Esophagus muscularis mucosa (tissue), 4 donors: ENCODE measurements at regions of chr6 and their contacts with region 1.

Region 1: DNA sequence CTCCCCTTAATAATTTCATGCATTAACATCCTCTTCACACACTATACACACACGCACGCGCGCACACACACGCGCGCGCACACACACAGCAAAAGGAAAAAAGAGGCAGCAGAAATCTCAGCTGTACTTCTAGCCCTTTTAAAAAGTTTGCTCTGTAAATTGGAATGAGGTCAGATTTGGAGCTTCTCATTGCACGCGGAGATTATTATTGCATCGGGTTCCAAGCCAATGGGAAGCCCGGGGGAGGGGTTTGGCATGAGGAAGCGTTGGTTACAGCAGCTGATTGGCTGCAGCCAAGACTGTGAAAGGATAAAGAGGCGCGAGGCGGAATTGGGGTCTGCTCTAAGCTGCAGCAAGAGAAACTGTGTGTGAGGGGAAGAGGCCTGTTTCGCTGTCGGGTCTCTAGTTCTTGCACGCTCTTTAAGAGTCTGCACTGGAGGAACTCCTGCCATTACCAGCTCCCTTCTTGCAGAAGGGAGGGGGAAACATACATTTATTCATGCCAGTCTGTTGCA is at the start of gene SOX4:
- DNase-seq: peak; percentile 97
- H3K4me3 ChIP-seq: peak within 1 kb of the TSS; percentile 79 to 85 (median 79)
- H3K27ac ChIP-seq: peak within 1 kb of the TSS; percentile 91 to 95 (median 94)
- H3K4me1 ChIP-seq: peaks cover 12 to 22% (median 21%) of the 10 kb centered on the region in 4 donors
- H3K27me3 ChIP-seq: no peaks in the 10 kb centered on the region
- CTCF ChIP-seq: no peak
- EP300 ChIP-seq: no peak
- POLR2A ChIP-seq: no peak
- total RNA-seq, gene SOX4: 4.1 to 6.5 (median 4.8) TPM

Region 2: GRCh38 chr6:20564269-20564668 is 1029.2 kb before region 1 on chr6:
- intact Hi-C with region 1: loop called (anchors 2 kb)
- DNase-seq: no peak
- H3K4me3 ChIP-seq: no peak overlapping the region
- H3K27ac ChIP-seq: no peak overlapping the region
- H3K4me1 ChIP-seq: peaks cover 0 to 14% (median 8%) of the 10 kb centered on the region in 4 donors
- H3K27me3 ChIP-seq: no peaks in the 10 kb centered on the region
- CTCF ChIP-seq: peak; percentile 48 to 67 (median 56)
- EP300 ChIP-seq: no peak
- POLR2A ChIP-seq: no peak

Region 3: GRCh38 chr6:21664314-21665109 is 71.0 kb after region 1 on chr6:
- intact Hi-C with region 1: loop called (anchors 5 kb)
- DNase-seq: no peak
- H3K4me3 ChIP-seq: peak overlapping the region; percentile 62 to 78 (median 70)
- H3K27ac ChIP-seq: peak overlapping the region; percentile 57 to 83 (median 80)
- H3K4me1 ChIP-seq: peaks cover 27 to 53% (median 40%) of the 10 kb centered on the region in 4 donors
- H3K27me3 ChIP-seq: no peaks in the 10 kb centered on the region
- CTCF ChIP-seq: no peak
- EP300 ChIP-seq: no peak
- POLR2A ChIP-seq: no peak

Region 4: GRCh38 chr6:21707524-21708319 is 114.3 kb after region 1 on chr6:
- intact Hi-C with region 1: no loop called
- DNase-seq: no peak
- H3K4me3 ChIP-seq: no peak overlapping the region
- H3K27ac ChIP-seq: no peak overlapping the region
- H3K4me1 ChIP-seq: peaks cover 0 to 37% (median 28%) of the 10 kb centered on the region in 4 donors
- H3K27me3 ChIP-seq: no peaks in the 10 kb centered on the region
- CTCF ChIP-seq: no peak
- EP300 ChIP-seq: no peak
- POLR2A ChIP-seq: no peak

Region 5: GRCh38 chr6:21731411-21732031 is 138.1 kb after region 1 on chr6:
- intact Hi-C with region 1: loop called (anchors 10 kb)
- DNase-seq: peak; percentile 90
- H3K4me3 ChIP-seq: no peak overlapping the region
- H3K27ac ChIP-seq: peak overlapping the region; percentile 45 to 75 (median 74)
- H3K4me1 ChIP-seq: peaks cover 9 to 60% (median 56%) of the 10 kb centered on the region in 4 donors
- H3K27me3 ChIP-seq: no peaks in the 10 kb centered on the region
- CTCF ChIP-seq: no peak
- EP300 ChIP-seq: no peak
- POLR2A ChIP-seq: no peak

Region 6: DNA sequence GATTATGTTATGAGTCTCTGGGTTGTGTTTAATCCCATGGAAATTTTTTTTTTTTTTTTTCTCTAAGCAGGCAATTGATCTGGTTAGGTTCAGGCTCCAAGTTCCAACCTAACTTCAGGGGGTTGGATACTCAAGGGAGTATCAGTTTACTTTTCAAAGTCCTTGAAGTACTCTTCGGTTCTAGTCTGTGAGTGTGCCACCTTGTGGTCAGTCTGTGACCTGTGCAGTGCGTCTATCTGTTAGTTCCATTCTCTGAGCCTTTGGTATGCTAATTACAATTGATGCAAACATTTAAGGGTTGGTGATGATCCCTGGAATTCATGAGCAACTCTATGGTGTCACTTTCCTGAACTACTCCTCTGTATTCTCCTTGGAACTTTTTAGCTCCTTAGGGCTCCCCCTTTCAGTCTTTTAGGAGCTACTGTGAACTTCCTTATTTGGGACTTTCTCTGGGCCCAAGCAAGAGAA is 342.1 kb after region 1 on chr6:
- intact Hi-C with region 1: loop called (anchors 5 kb)
- DNase-seq: no peak
- H3K4me3 ChIP-seq: no peak overlapping the region
- H3K27ac ChIP-seq: no peak overlapping the region
- H3K4me1 ChIP-seq: peaks cover 0 to 9% (median 0%) of the 10 kb centered on the region in 4 donors
- H3K27me3 ChIP-seq: no peaks in the 10 kb centered on the region
- CTCF ChIP-seq: peak; percentile 28 to 62 (median 43)
- EP300 ChIP-seq: no peak
- POLR2A ChIP-seq: no peak

Region 7: DNA sequence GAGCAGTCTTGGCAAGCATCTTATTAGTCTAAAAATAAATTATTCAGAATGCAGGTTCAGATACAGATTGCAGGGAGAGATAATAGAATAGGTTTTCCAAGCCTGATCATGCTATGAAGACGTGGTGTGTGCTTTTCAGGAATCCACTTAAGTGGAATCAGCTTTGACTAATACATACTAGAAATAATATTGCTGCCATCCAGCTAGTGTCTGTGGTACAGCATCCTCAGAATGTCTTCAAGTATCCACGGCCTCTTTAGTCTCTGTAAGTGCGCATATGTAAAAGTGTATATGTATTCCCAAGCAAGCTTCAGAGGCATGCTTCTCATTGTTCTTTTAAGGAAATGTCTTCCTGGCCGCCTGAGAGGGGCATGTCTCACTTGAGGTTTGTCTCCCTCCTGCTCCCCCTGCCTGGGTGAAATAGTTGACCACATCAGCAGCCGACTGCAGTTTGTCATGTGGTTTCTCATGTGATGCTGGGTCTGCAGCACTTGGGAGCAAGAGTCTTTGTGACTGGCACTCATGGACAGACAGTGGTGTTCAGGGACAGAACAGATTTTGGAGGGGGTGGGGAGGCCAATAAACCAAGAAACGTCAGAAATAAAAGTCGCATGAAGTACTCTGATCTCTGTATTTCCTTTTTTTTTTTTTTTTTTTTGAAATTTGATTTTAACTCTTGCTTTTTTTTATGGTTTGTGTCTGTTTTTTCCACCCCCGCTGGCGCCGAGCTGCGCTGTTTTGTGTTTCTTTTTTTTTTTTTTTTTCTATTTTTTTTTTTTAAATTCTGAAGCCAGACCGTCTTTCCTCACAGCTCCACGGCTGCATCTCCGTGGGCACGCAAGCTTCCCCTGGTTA is 552.6 kb after region 1 on chr6:
- intact Hi-C with region 1: loop called (anchors 10 kb)
- DNase-seq: no peak
- H3K4me3 ChIP-seq: peak overlapping the region in 3 of 4 donors; percentile 28 to 37 (median 31)
- H3K27ac ChIP-seq: no peak overlapping the region
- H3K4me1 ChIP-seq: peaks cover 54 to 71% (median 60%) of the 10 kb centered on the region in 4 donors
- H3K27me3 ChIP-seq: no peaks in the 10 kb centered on the region
- CTCF ChIP-seq: peak; percentile 22 to 41 (median 32)
- EP300 ChIP-seq: no peak
- POLR2A ChIP-seq: no peak

Region 8: DNA sequence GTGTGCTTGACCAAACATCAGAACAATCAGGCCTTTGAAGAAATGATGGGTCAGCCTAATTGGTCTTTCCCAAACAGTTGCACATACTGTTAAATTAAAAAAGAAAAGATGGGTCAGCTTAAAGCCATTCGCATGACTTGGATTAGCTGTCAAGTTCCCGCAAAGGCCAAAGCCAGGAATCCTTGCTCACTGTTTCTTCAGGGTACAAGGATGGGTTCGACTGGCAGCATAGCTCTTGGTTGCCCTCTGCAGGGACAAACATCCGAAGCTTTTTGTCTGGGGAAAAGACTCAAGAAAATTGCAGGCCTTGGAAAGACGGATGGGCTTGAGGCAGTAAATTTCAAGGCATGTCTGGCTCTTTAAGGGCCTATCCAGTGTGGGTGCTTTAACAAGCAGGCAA is 1143.9 kb after region 1 on chr6:
- intact Hi-C with region 1: loop called (anchors 10 kb)
- DNase-seq: no peak
- H3K4me3 ChIP-seq: no peak overlapping the region
- H3K27ac ChIP-seq: no peak overlapping the region
- H3K4me1 ChIP-seq: peaks cover 0 to 4% (median under 1%) of the 10 kb centered on the region in 4 donors
- H3K27me3 ChIP-seq: no peaks in the 10 kb centered on the region
- CTCF ChIP-seq: peak in 2 of 3 experiments; percentile 24 to 46
- EP300 ChIP-seq: no peak
- POLR2A ChIP-seq: no peak